Ascending aorta (tissue), 2 donors: ENCODE measurements at regions of chr11 and their contacts with region 1.

Region 1: GRCh38 chr11:57530596-57531507 is at the start of gene TIMM10:
- DNase-seq: peak; percentile 82 to 97
- H3K4me3 ChIP-seq: peak within 1 kb of the TSS; percentile 67
- H3K27ac ChIP-seq: peak within 1 kb of the TSS; percentile 56 to 70
- H3K4me1 ChIP-seq: peaks cover 5 to 12% of the 10 kb centered on the region in 2 donors
- H3K27me3 ChIP-seq: no peaks in the 10 kb centered on the region
- CTCF ChIP-seq: no peak
- total RNA-seq, gene TIMM10: not detected

Region 2: GRCh38 chr11:57324886-57325734 is 205.7 kb before region 1 on chr11 and contains the start of gene TNKS1BP1:
- intact Hi-C with region 1: loop called (anchors 5 kb)
- DNase-seq: peak; percentile 97 to 99
- H3K4me3 ChIP-seq: peak within 1 kb of the TSS; percentile 90 to 94
- H3K27ac ChIP-seq: peak within 1 kb of the TSS; percentile 94 to 98
- H3K4me1 ChIP-seq: peaks cover 8 to 28% of the 10 kb centered on the region in 2 donors
- H3K27me3 ChIP-seq: no peaks in the 10 kb centered on the region
- CTCF ChIP-seq: no peak
- total RNA-seq, gene TNKS1BP1: 131 TPM

Region 3: GRCh38 chr11:57456960-57457642 is 73.8 kb before region 1 on chr11:
- intact Hi-C with region 1: loop called (anchors 1 kb)
- DNase-seq: peak; percentile 50 to 95
- H3K4me3 ChIP-seq: peak overlapping the region; percentile 53 to 55
- H3K27ac ChIP-seq: no peak overlapping the region
- H3K4me1 ChIP-seq: peaks cover 16 to 32% of the 10 kb centered on the region in 2 donors
- H3K27me3 ChIP-seq: peaks cover 28% of the 10 kb centered on the region
- CTCF ChIP-seq: peak; percentile 91 to 100 (median 100)

Region 4: GRCh38 chr11:57499413-57499982 is 31.4 kb before region 1 on chr11:
- intact Hi-C with region 1: loop called (anchors 2 kb)
- DNase-seq: peak; percentile 72 to 97
- H3K4me3 ChIP-seq: peak overlapping the region; percentile 39 to 55
- H3K27ac ChIP-seq: peak overlapping the region; percentile 71 to 77
- H3K4me1 ChIP-seq: peaks cover 4 to 12% of the 10 kb centered on the region in 2 donors
- H3K27me3 ChIP-seq: no peaks in the 10 kb centered on the region
- CTCF ChIP-seq: no peak

Region 5: GRCh38 chr11:57712256-57713150 is 181.7 kb after region 1 on chr11 and contains the start of gene TMX2:
- intact Hi-C with region 1: loop called (anchors 1 kb)
- DNase-seq: peak; percentile 80 to 97
- H3K4me3 ChIP-seq: peak within 1 kb of the TSS; percentile 79 to 85
- H3K27ac ChIP-seq: peak within 1 kb of the TSS; percentile 82 to 89
- H3K4me1 ChIP-seq: peaks cover 16 to 29% of the 10 kb centered on the region in 2 donors
- H3K27me3 ChIP-seq: no peaks in the 10 kb centered on the region
- CTCF ChIP-seq: no peak
- total RNA-seq, gene TMX2: 65.3 TPM